ENCODE measurements at regions of chr5 and their contacts with region 1.

Region 1: DNA sequence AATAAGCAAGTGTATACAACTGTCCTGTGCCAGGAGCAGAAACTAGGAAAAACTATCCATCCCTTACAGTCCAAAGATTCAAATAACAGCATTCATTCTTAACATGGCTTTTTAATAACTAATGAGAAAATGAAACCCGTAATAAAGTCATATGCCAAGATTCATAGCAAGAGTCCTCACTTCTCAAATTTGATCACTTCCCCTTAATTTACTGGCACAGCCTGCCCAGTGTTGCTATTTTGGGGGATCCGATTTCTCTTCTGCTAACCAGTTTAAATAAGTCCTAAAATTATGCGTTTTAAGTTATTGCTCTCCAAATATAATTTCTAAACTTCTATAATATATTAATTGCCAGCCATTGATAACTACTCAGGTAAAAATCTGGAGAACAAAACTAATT is 177.0 kb upstream of the PTGER4 start:
- DNase-seq: no peak
- H3K4me3 ChIP-seq: no peak overlapping the region
- H3K4me3 Mint-ChIP-seq: no peak overlapping the region
- H3K27ac ChIP-seq: no peak overlapping the region
- H3K27ac Mint-ChIP-seq: no peak overlapping the region
- H3K4me1 ChIP-seq: peaks cover 6% of the 10 kb centered on the region
- H3K4me1 Mint-ChIP-seq: peaks cover 4 to 12% (median 6%) of the 10 kb centered on the region in 4 donors
- H3K27me3 ChIP-seq: no peaks in the 10 kb centered on the region
- H3K27me3 Mint-ChIP-seq: no peaks in the 10 kb centered on the region

Region 2: DNA sequence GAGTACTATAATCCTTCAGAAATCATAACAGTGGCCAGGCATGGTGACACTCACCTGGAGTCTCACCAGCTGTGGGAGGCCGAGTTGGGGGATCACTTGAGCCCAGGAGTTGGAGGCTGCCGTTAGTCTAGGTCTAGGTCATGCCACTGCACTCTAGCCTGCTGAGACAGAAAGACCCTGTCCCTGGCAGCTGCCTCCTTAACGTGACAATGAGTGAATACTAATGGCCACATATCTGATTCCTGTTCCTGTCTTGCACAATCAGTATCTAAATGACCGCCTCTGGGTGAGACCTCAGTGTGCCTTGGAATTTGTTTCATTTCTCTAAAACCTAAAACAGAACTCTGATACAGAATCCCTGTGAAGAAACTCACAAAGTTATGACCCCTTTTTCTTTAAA is 946.9 kb before region 1 on chr5:
- CTCF ChIA-PET with region 1: no interaction called
- POLR2A ChIA-PET with region 1: no interaction called
- intact Hi-C with region 1: no loop called
- DNase-seq: no peak
- H3K4me3 ChIP-seq: no peak overlapping the region
- H3K4me3 Mint-ChIP-seq: no peak overlapping the region
- H3K27ac ChIP-seq: no peak overlapping the region
- H3K27ac Mint-ChIP-seq: no peak overlapping the region
- H3K4me1 ChIP-seq: no peaks in the 10 kb centered on the region
- H3K4me1 Mint-ChIP-seq: no peaks in the 10 kb centered on the region
- H3K27me3 ChIP-seq: no peaks in the 10 kb centered on the region
- H3K27me3 Mint-ChIP-seq: peaks cover 11 to 12% of the 10 kb centered on the region in 2 donors

Region 3: DNA sequence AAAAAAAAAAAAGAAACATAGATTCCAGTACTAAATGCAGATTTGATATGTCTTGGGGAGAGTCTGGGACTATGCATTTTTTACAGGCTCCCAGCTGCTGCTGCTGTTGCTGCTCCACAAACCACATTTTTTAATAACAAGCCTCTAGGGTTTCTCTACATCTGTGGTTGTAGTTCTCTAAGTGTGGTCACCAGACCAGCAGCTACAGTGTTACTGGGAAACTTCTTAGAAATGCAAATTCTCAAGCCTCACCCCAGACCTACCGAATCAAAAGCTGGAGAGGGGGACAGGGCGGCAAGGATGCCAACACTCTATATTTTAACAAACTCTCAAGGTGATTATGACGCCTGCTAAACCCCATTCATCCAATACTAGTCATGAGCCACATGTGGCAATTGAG is 116.4 kb before region 1 on chr5:
- CTCF ChIA-PET with region 1: no interaction called
- POLR2A ChIA-PET with region 1: interaction called, 4 read pairs
- intact Hi-C with region 1: loop called (anchors 10 kb)
- DNase-seq: peak in 4 of 5 donors; percentile 55 to 68 (median 57)
- H3K4me3 ChIP-seq: no peak overlapping the region
- H3K4me3 Mint-ChIP-seq: peak overlapping the region in 6 of 8 donors; percentile 9 to 76 (median 51)
- H3K27ac ChIP-seq: peak overlapping the region; percentile 28
- H3K27ac Mint-ChIP-seq: peak overlapping the region; percentile 70 to 96 (median 84)
- H3K4me1 ChIP-seq: peaks cover 91% of the 10 kb centered on the region
- H3K4me1 Mint-ChIP-seq: peaks cover 75 to 93% (median 82%) of the 10 kb centered on the region in 4 donors
- H3K27me3 ChIP-seq: no peaks in the 10 kb centered on the region
- H3K27me3 Mint-ChIP-seq: no peaks in the 10 kb centered on the region

Region 4: GRCh38 chr5:40557501-40557900 is 54.8 kb after region 1 on chr5:
- CTCF ChIA-PET with region 1: no interaction called
- POLR2A ChIA-PET with region 1: no interaction called
- intact Hi-C with region 1: no loop called
- DNase-seq: no peak
- H3K4me3 ChIP-seq: no peak overlapping the region
- H3K4me3 Mint-ChIP-seq: no peak overlapping the region
- H3K27ac ChIP-seq: no peak overlapping the region
- H3K27ac Mint-ChIP-seq: no peak overlapping the region
- H3K4me1 ChIP-seq: no peaks in the 10 kb centered on the region
- H3K4me1 Mint-ChIP-seq: peaks cover 0 to 9% (median 4%) of the 10 kb centered on the region in 4 donors
- H3K27me3 ChIP-seq: no peaks in the 10 kb centered on the region
- H3K27me3 Mint-ChIP-seq: no peaks in the 10 kb centered on the region

Measured in CD4-positive, alpha-beta memory T cell (primary cell).